H1 (cell line): ENCODE measurements at regions of chr6 and their contacts with region 1.

Region 1: DNA sequence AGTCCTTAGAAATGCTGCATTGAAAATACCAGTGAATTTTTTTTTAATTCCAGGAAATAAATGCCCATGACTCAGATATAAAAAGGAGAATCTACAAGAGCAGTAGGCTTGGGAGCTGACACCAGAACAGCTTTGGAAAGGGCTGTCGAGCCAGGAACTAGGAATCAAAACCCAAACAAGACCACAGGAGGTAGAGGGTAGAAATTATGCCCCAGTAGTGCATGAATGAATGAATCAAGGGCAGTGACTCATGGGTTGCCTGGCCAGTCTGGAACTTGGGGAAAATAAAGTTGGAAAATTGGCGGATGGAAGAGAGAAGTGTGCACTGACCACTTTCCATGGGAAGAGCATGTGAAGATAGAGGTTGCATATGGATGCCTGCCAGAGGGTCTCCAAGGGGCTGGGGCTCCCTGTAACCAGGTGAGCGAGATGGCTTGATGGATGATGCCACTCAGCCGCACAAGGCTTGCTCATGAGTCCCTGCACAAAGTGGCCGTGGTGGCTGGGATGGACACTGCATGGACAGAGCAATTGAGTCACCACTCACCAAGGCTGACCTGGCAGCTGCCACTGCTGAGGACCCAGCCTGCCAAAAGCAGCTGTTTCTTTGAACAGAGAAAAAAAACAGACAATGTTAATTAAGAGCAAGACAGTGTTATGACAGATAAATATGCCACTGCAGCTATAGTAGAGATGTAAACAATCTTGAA is 15.2 kb upstream of the MCCD1 start:
- DNase-seq: no peak
- H3K4me3 ChIP-seq: no peak overlapping the region
- H3K27ac ChIP-seq: no peak overlapping the region
- H3K4me1 ChIP-seq: no peaks in the 10 kb centered on the region
- H3K27me3 ChIP-seq: no peaks in the 10 kb centered on the region
- CTCF ChIP-seq: no peak
- EP300 ChIP-seq: no peak
- POLR2A ChIP-seq: no peak
- RAD21 ChIP-seq: no peak

Region 2: DNA sequence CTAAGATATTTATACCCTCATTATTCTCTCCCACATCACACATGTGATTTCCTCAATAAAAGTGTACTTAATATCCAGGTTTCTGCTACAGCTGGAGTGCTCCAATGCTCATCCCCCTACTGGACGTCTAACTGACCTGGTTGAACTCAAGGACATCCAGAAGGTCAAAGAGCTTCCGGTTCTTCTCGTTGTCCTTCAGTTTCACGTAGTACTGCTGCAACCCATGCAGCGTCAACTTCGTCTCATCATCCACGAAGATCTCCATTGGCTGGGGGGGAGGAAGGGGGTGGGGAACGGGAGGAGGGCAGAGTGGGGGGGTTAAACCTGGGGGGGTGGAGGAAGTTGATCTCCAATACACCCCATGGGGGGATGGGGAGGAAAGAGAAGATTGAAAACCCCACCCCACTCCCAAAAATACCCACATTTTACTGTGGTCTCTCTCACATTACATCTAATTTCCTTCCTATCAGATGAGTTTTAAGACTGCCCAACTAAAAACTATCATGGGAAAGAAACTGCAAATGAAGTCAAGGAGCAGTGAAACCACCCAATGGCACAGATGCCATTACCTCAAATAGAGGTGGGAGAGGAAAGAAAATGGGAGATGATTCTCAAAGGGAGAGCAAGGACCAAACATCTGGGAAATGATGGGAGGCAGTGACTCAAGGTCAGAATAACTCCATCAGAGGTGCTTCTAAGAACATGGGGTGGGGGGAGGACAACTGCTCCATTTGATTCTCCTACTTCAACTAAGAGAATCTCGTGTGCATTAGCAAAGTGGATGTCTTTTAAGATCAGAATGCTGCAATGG is 19.2 kb after region 1 on chr6:
- CTCF ChIA-PET with region 1: interaction called, 8 read pairs
- POLR2A ChIA-PET with region 1: interaction called, 19 read pairs
- DNase-seq: no peak
- H3K4me3 ChIP-seq: no peak overlapping the region
- H3K27ac ChIP-seq: no peak overlapping the region
- H3K4me1 ChIP-seq: peaks cover 1 to 5% (median 4%) of the 10 kb centered on the region in 4 experiments; a peak in 4 of 7 replicates
- H3K27me3 ChIP-seq: no peaks in the 10 kb centered on the region
- CTCF ChIP-seq: no peak
- EP300 ChIP-seq: no peak
- POLR2A ChIP-seq: no peak
- RAD21 ChIP-seq: no peak